ENCODE measurements at regions of chr6 and their contacts with region 1.

Region 1: GRCh38 chr6:41027799-41028628 is 11.0 kb downstream of the UNC5CL start:
- DNase-seq: peak; percentile 79
- H3K4me3 Mint-ChIP-seq: peak overlapping the region; percentile 61
- H3K27ac Mint-ChIP-seq: no peak overlapping the region
- H3K4me1 Mint-ChIP-seq: peaks cover 29% of the 10 kb centered on the region
- H3K27me3 Mint-ChIP-seq: no peaks in the 10 kb centered on the region
- CTCF ChIP-seq: peak; percentile 98

Region 2: GRCh38 chr6:39377539-39377950 is 1650.5 kb before region 1 on chr6:
- CTCF ChIA-PET with region 1: interaction called, 3 read pairs
- POLR2A ChIA-PET with region 1: no interaction called
- intact Hi-C with region 1: loop called (anchors 10 kb)
- DNase-seq: peak; percentile 73
- H3K4me3 Mint-ChIP-seq: no peak overlapping the region
- H3K27ac Mint-ChIP-seq: no peak overlapping the region
- H3K4me1 Mint-ChIP-seq: peaks cover 5% of the 10 kb centered on the region
- H3K27me3 Mint-ChIP-seq: no peaks in the 10 kb centered on the region
- CTCF ChIP-seq: peak; percentile 86

Region 3: DNA sequence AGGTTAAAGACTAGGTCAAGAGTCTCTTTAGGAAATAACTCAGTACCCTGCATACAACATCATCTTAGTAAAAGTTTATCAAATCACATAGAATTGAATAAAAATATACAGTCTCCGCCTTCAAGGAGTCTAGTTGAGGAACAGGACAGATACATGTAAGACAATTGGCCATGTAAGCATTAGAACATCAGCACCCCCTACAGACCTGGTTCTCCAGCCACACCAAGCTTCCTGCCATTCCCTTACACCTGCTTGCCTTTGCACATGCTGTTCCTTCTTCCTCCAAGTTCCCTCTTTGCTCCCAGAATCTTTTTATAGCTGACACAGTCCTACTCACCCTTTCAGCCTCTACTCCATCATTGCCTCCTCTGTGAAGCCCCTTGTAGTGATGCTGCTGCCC is 253.1 kb before region 1 on chr6:
- CTCF ChIA-PET with region 1: no interaction called
- POLR2A ChIA-PET with region 1: no interaction called
- intact Hi-C with region 1: no loop called
- DNase-seq: no peak
- H3K4me3 Mint-ChIP-seq: no peak overlapping the region
- H3K27ac Mint-ChIP-seq: no peak overlapping the region
- H3K4me1 Mint-ChIP-seq: no peaks in the 10 kb centered on the region
- H3K27me3 Mint-ChIP-seq: no peaks in the 10 kb centered on the region
- CTCF ChIP-seq: no peak

Region 4: GRCh38 chr6:40894962-40895799 is 132.8 kb before region 1 on chr6:
- CTCF ChIA-PET with region 1: interaction called, 36 read pairs
- POLR2A ChIA-PET with region 1: interaction called, 3 read pairs
- intact Hi-C with region 1: loop called (anchors 1 kb)
- DNase-seq: peak; percentile 71
- H3K4me3 Mint-ChIP-seq: no peak overlapping the region
- H3K27ac Mint-ChIP-seq: no peak overlapping the region
- H3K4me1 Mint-ChIP-seq: no peaks in the 10 kb centered on the region
- H3K27me3 Mint-ChIP-seq: peaks cover 27% of the 10 kb centered on the region
- CTCF ChIP-seq: peak; percentile 79

Region 5: GRCh38 chr6:40999569-40999968 is 28.4 kb before region 1 on chr6:
- CTCF ChIA-PET with region 1: interaction called, 20 read pairs
- POLR2A ChIA-PET with region 1: no interaction called
- intact Hi-C with region 1: no loop called
- DNase-seq: peak; percentile 50
- H3K4me3 Mint-ChIP-seq: no peak overlapping the region
- H3K27ac Mint-ChIP-seq: no peak overlapping the region
- H3K4me1 Mint-ChIP-seq: peaks cover 14% of the 10 kb centered on the region
- H3K27me3 Mint-ChIP-seq: peaks cover 28% of the 10 kb centered on the region
- CTCF ChIP-seq: no peak

Region 6: DNA sequence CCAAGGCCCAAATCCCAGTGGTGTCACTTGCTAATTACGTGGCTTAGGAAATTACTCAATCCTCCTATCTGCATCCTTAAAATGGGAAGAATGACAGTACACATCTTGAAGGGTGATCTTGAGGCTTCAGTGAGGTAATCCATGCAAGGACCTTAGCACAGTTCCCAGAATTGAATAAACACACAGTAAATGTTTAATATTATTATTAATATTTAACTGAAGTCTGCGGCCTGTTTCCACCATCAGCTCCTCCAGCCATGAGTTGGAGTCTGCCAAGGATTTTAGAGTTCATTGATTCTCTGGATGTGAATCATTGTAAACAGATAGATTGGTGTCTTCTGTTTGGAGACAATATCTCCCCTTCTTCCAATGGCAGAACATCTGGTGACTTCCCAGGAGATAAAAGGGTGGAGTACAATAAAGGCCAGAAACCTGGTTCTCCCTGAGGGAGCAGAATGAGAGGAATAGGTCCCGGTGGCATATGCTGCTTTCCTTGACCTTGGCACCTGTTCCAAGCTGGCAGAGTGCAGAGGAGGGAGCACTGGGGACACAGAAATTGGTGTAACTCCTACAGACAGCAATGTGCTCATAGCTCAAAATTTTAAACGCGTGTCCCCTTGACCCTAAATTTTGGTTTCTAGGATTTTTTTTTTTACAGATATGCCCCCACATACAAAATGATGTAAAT is 14.4 kb before region 1 on chr6:
- CTCF ChIA-PET with region 1: interaction called, 20 read pairs
- POLR2A ChIA-PET with region 1: interaction called, 6 read pairs
- intact Hi-C with region 1: no loop called
- DNase-seq: no peak
- H3K4me3 Mint-ChIP-seq: no peak overlapping the region
- H3K27ac Mint-ChIP-seq: no peak overlapping the region
- H3K4me1 Mint-ChIP-seq: no peaks in the 10 kb centered on the region
- H3K27me3 Mint-ChIP-seq: no peaks in the 10 kb centered on the region
- CTCF ChIP-seq: no peak

Region 7: GRCh38 chr6:41066867-41067304 is 38.9 kb after region 1 on chr6:
- CTCF ChIA-PET with region 1: interaction called, 13 read pairs
- POLR2A ChIA-PET with region 1: interaction called, 9 read pairs
- intact Hi-C with region 1: loop called (anchors 2 kb)
- DNase-seq: peak; percentile 75
- H3K4me3 Mint-ChIP-seq: no peak overlapping the region
- H3K27ac Mint-ChIP-seq: peak overlapping the region; percentile 79
- H3K4me1 Mint-ChIP-seq: peaks cover 15% of the 10 kb centered on the region
- H3K27me3 Mint-ChIP-seq: no peaks in the 10 kb centered on the region
- CTCF ChIP-seq: peak; percentile 70

Region 8: DNA sequence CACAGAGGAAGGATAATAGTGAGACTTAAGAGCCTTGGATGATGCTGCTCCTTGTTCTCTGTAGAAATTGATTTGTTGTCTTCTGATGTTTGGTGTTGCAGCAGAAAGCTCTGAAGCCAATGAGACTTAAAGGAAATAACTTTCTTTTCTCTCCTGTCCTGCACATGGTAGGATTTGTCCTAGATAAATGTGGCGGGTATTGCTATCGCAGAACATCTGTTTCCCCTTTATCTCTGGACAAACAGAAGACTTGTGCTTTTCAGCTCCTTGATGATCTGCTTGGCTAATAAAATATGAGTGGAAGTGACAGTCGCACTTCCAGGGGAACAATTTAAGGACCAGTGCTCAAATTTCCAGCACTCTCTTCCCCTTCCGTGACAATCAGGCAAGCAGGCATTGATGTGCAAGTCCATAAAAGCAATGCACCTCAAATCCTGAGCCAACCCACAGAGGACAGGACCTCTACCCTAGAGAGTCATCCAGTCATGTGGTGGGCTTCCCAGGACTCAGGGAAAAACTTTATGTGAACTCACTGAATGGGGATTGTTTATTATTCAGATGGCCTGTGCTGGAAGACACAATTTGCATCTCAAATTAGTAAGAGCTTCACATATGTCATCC is 297.5 kb after region 1 on chr6:
- CTCF ChIA-PET with region 1: no interaction called
- POLR2A ChIA-PET with region 1: no interaction called
- intact Hi-C with region 1: no loop called
- DNase-seq: no peak
- H3K4me3 Mint-ChIP-seq: no peak overlapping the region
- H3K27ac Mint-ChIP-seq: no peak overlapping the region
- H3K4me1 Mint-ChIP-seq: peaks cover 5% of the 10 kb centered on the region
- H3K27me3 Mint-ChIP-seq: peaks cover 56% of the 10 kb centered on the region
- CTCF ChIP-seq: no peak

Region 9: DNA sequence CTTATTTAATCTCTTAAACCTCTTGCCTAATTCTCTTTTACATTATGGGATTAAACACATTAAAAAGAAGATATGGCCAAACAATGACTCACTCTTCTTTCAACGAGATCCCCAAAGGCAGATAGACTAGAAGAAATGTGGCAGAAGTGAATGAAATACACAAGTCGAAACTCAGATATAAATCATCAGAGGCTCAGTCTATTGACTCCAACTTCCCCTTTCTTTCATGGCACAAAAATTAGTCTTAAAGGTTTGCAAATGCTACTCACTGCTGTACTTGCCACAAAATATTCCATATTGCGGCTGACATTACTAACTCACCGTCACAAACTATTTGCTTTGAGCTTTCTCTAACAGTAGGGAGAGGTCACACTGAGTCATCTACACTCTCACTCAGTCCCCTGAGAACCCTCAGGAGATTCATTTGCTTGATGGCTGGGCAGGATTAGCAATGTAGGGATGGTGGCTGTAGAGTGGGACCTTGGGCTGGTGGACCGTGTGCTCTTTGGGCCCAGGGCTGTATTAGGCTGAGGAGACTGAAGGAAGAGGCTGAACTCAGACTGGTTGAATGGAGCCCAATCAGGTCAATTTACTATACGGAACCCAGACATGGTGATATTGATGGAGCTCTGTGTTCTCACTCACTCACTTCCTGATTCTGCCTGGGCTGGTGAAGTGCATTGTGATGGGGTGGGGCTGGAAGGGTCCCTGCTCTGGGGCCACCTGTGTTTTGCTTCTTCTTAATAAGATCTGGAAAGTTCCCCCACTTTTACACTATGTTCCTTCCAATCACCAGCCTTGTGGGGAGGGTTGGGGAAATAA is 1493.0 kb after region 1 on chr6:
- CTCF ChIA-PET with region 1: no interaction called
- POLR2A ChIA-PET with region 1: no interaction called
- intact Hi-C with region 1: no loop called
- DNase-seq: peak; percentile 23
- H3K4me3 Mint-ChIP-seq: no peak overlapping the region
- H3K27ac Mint-ChIP-seq: no peak overlapping the region
- H3K4me1 Mint-ChIP-seq: peaks cover 8% of the 10 kb centered on the region
- H3K27me3 Mint-ChIP-seq: no peaks in the 10 kb centered on the region
- CTCF ChIP-seq: no peak

Measured in MCF 10A (cell line).